AG04449 (cell line): ENCODE measurements at regions of chr1 and their contacts with region 1.

Region 1: GRCh38 chr1:26538480-26539412 is 9.2 kb downstream of the RPS6KA1 start:
- DNase-seq: no peak
- H3K4me3 ChIP-seq: no peak overlapping the region
- CTCF ChIP-seq: peak; percentile 38

Region 2: DNA sequence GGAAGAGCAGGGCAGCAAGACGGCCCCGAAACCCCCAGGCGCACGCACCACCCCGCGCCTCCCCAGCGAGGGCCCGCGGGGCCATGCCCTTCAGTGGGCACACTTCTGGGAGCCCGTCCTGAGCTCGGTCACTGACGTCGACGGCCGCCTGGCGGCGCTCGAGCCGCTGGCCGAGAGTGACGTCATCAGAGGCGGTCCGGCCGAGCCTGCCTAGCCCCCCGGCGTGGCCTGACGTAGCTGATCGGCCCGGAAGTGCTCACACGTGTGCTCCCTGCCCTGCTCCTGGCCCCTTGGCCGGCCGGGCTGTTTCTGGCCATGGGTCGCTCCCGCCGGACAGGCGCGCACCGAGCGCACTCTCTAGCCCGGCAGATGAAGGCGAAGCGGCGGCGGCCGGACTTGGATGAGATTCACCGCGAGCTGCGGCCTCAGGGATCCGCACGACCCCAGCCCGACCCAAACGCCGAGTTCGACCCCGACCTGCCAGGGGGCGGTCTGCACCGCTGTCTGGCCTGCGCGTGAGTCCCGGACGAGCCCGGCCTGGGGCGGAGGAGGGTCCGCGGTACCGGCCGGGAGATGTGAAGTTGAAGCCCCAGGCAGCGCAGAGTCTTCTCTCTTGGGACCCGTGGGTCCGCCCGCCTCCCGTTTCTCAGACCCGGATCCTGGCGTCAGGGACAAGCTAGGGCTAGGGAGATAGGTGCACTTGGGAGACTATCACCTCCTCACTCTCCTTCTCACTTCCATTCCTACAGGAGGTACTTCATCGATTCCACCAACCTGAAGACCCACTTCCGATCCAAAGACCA is 368.9 kb before region 1 on chr1 and contains the start of gene ZNF593:
- CTCF ChIA-PET with region 1: no interaction called
- POLR2A ChIA-PET with region 1: no interaction called
- DNase-seq: peak; percentile 19
- H3K4me3 ChIP-seq: peak within 1 kb of the TSS; percentile 93
- CTCF ChIP-seq: peak; percentile 100

Region 3: DNA sequence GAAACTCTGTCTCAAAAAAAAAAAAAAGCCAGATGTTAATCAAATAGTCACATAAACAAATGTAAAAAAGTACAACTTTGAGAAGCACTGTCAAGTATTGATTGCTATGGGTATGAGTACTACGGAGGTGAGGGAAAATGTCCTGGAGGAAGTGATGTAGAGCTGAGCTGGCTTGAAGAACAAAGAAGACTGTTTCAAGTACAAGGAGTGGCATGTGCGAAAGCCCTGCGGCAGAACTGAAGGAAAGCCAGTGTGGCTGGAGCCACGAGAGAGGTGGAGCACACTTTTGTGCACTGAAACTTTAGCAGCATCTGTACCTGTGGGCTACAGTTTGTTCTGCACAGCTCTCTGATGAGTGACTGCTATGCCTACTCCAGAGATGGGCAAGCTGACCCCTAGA is 14.6 kb before region 1 on chr1:
- CTCF ChIA-PET with region 1: interaction called, 22 read pairs
- POLR2A ChIA-PET with region 1: no interaction called
- DNase-seq: no peak
- H3K4me3 ChIP-seq: no peak overlapping the region
- CTCF ChIP-seq: no peak

Region 4: GRCh38 chr1:26550946-26551345 is 12.2 kb after region 1 on chr1:
- CTCF ChIA-PET with region 1: interaction called, 34 read pairs
- POLR2A ChIA-PET with region 1: no interaction called
- DNase-seq: no peak
- H3K4me3 ChIP-seq: no peak overlapping the region
- CTCF ChIP-seq: no peak

Region 5: DNA sequence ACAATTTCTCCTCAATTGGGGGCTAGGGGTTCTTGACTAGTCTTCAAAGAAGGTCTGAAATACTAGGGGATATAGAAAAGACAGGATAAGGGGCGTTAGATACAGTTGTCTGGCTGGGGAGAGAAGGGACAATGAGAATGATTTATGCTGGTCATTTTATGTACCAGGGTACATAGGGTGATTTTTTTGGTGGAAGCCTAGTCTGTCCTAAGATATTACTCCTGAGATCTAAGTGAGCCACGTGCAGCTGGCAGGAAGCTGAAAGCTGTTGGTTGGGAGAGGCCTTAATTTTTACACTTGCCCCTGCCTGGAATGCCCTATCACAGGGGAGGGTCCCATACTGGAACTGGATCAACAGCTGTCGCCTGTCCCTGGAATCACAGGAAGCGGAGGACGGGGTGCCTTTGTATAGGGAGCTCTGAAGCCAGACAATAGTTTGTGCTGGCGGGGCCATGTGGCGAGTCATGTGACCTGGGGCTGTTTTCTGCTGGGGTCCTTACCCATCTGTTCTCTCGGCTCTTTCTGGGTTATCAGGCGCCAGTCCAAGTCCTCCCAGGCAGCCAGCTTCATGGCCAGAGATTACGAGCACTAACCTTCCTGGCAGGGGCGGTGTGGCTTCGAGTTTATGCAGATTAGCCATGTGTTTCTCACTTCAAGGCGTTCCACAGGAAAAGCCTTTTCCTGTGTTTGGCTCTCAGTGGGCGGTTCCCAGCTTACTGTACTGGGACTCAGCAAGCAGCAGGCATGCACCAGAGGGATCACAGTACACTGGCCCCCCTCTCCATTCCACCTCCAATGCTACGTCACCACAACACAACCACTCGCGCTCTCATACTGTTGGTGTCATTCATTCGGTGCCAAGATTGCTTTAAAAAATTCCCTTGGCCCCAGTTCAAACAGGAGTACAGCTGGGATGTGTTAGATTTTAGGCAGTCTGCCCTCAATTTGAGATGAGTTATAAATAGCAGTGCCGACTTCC is 184.6 kb after region 1 on chr1:
- CTCF ChIA-PET with region 1: no interaction called
- POLR2A ChIA-PET with region 1: no interaction called
- DNase-seq: peak; percentile 96
- H3K4me3 ChIP-seq: no peak overlapping the region; the same call in 1 of the 2 replicates
- CTCF ChIP-seq: no peak